Activated naive CD4-positive, alpha-beta T cell treated with anti-CD3 and anti-CD28 coated beads, Interleukin-2, amount 10 ng/mL, durations not matched to agents 7 days and 5 days (primary cell): ENCODE measurements at regions of chr14 and their contacts with region 1.

Region 1: DNA sequence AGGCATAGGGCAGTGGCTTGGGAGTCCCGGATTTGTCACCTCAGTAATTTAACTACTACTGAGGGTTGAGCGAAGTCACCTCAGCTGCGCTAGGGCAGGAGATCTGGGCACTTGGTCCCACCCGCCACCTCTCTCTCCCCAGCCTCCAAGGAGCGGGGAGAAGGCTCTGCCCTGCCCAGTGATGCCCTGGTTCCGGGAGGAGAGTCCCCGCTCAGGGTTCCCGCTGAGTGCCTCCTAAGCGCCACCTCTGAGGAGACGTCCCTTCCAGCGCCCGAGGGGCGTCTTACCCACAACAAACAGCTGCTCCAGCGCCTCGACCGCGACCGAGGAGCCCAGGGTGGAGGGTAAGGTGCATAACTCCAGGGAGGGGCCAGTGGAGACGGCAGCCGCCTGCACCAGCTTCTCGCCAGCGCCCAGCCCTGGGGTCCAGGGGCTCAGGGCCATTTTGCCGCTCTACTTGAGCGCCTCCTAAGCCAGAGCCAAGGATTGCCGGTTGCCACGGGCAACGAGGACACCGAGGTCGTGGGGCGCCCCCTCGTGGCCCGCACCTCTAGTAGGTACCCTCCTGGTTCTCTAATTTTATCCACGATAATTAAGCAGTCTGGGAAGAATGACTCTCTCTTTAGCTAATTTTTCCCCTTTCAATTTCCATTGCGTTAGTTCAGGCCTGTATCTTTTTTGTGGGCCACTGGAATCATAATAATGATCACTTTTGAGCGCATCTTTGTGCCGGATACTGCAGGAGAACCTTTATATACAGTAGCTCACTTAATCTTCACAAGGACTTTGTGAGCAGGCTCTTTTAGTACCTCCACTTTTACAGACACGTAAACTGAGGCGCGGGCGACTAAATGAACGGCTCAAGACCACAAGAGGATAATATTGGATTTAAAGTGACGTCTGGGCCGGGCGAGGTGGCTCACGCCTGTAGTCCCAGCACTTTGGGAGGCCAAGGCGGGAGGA is at the start of gene CCDC175:
- DNase-seq: peak; percentile 88
- H3K4me3 Mint-ChIP-seq: peak within 1 kb of the TSS; percentile 59
- H3K27ac Mint-ChIP-seq: no peak within 1 kb of the TSS
- H3K4me1 Mint-ChIP-seq: peaks cover 9% of the 10 kb centered on the region
- H3K27me3 Mint-ChIP-seq: peaks cover 28% of the 10 kb centered on the region

Region 2: DNA sequence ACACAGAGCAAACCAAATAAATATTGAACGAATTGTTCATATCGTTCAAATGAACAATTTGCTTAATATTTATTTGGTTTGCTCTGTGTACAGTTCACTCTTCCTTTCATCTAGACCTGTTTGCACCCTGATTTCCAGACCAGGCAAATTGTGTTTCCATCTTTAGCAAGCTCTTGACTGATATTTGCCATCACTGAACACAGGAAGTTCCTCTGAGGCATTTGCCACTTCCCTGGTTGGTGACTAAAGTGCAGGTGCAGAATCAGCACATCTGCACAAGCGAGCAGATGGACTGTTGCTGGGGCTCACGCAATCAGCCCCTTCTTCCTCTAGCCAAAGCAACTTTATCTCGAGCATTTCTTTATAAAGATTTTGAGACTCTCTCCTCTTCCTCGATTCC is 275.3 kb before region 1 on chr14:
- CTCF ChIA-PET with region 1: no interaction called
- DNase-seq: peak; percentile 47
- H3K4me3 Mint-ChIP-seq: no peak overlapping the region
- H3K27ac Mint-ChIP-seq: no peak overlapping the region
- H3K4me1 Mint-ChIP-seq: peaks cover 35% of the 10 kb centered on the region
- H3K27me3 Mint-ChIP-seq: no peaks in the 10 kb centered on the region

Region 3: DNA sequence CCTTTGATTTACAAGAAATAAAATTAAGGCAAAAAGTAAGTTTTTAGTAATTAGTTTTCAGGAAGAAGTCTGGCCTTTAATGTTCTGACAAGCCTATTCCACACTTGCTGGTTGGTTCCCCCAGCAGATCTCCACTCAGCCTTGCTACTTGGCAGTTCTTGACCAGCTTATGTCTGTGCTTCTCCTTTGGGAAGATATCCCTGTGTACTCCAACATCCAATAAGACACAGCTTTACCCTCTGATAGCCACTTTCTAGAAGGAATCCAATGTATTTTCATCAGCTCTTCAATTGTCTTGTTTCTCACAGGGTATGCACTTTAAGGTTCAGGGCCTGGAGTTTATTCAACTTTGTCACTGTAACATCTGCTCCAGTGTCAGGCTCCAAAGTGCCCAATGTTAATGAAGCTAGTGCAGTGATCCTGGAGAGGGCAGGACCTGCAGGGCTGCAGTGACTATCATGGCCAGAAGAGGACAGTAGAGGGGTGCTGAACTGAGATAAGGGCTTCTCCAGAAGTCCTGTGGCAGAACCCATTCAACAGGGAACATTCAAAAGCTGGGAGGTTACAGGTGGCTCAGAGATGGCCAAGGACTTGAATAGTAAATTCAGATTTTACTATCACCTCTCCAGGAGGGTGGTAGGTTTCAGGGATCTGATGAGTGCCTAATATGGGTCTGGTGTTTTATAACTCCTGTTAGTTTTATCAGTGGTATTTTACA is 69.4 kb before region 1 on chr14:
- CTCF ChIA-PET with region 1: interaction called, 41 read pairs
- DNase-seq: peak; percentile 73
- H3K4me3 Mint-ChIP-seq: no peak overlapping the region
- H3K27ac Mint-ChIP-seq: no peak overlapping the region
- H3K4me1 Mint-ChIP-seq: peaks cover 11% of the 10 kb centered on the region
- H3K27me3 Mint-ChIP-seq: no peaks in the 10 kb centered on the region

Region 4: DNA sequence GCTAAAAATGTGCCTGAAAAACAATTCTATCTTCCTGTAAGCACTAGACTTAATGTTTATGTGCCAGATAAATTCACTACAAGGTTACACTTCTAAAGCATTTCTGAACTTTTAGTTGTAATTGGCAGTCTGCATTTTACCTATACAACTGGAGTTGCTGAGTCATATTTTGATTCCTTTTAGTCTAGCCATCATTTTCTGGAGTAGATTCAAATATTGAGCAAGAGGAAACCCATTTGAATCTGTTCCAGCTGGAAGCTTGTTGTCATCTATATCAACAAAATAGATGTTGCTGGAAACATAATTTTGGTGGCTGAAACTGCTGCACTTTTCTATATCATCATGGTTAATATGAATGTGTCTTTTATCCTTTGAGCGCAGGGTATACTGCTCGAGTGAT is 122.2 kb after region 1 on chr14:
- CTCF ChIA-PET with region 1: no interaction called
- DNase-seq: no peak
- H3K4me3 Mint-ChIP-seq: no peak overlapping the region
- H3K27ac Mint-ChIP-seq: no peak overlapping the region
- H3K4me1 Mint-ChIP-seq: no peaks in the 10 kb centered on the region
- H3K27me3 Mint-ChIP-seq: peaks cover 4% of the 10 kb centered on the region

Region 5: DNA sequence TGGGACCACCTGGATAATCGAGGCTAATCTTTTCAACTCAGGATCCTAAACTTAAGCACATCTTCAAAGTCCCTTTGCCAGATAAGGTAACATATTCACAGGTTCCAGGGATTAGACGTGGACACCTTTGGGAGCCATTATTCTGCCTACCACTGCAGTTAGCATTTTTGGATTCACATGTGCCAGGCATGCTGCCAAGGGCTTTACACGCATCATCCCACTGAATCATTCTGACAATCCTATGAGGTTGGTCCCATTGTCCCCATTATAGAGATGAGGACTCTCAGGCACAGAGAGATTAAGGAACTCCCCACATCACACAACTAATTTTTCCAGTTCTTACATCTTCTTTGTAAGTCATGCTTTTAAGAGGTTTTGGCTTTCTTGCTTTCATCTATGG is 259.5 kb after region 1 on chr14:
- CTCF ChIA-PET with region 1: no interaction called
- DNase-seq: no peak
- H3K4me3 Mint-ChIP-seq: no peak overlapping the region
- H3K27ac Mint-ChIP-seq: no peak overlapping the region
- H3K4me1 Mint-ChIP-seq: no peaks in the 10 kb centered on the region
- H3K27me3 Mint-ChIP-seq: no peaks in the 10 kb centered on the region